Upper lobe of right lung (tissue), 1 donor: ENCODE measurements at regions of chr2 and their contacts with region 1.

Region 1: DNA sequence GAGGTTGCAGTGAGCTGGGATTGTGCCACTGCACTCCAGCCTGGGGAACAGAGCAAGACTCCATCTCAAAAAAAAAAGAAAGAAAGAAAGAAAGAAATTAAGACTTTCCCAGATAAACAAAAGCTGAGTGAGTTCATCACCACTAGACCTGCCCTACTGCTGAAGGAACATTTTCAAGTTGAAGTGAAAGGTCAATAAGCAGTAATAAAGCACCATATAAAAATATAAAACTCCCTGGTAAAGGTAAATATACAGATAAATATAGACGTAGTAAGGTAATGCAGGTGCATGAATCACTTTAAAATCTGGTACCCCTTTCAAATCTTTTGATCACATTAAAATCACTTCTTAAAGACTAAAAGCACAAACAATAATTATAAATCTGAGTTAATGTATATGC is 42.6 kb downstream of the UNC50 start:
- DNase-seq: no peak
- ATAC-seq: no peak
- H3K4me3 ChIP-seq: no peak overlapping the region
- H3K27ac ChIP-seq: no peak overlapping the region
- H3K4me1 ChIP-seq: no peaks in the 10 kb centered on the region
- H3K27me3 ChIP-seq: no peaks in the 10 kb centered on the region
- CTCF ChIP-seq: no peak

Region 2: DNA sequence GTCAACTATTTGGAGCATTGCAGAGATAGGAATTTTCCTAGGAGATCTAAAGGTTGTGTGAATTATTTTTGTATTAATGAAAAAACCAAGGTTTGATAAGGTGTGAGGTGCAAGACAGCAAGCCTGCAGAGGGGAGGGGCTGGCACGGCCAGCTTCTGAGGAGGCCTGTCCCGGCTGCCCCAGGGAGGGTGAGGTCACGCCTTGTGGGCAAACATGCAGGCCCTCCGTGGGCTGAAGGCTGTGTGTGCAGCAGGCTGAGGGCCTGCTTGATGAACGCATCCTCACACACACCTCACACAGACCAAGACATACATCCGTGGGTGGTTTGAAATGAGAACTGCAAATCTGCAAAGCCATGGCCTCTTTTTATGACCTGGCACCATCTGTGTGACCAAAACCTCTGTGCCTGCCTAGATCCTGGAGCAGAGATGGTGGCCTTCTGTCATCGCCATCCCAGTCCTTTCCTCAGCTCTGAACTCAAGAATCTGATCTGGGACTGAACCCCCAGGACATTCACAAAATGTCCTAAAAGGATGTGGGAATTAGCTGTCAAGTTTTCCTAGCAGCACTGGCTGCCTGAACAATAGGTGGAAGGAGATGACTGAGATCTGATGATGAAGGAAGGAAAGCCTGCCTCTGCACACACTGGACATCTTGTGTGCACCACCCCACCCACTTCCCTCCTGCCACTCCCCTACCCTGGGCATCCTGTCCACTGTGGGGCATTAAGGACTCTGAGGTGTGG is 182.3 kb after region 1 on chr2:
- intact Hi-C with region 1: loop called (anchors 2 kb)
- DNase-seq: no peak
- ATAC-seq: peak; percentile 78
- H3K4me3 ChIP-seq: no peak overlapping the region
- H3K27ac ChIP-seq: peak overlapping the region; percentile 73
- H3K4me1 ChIP-seq: peaks cover 20% of the 10 kb centered on the region
- H3K27me3 ChIP-seq: no peaks in the 10 kb centered on the region
- CTCF ChIP-seq: no peak